GM10248 (cell line): ENCODE measurements at regions of chr4 and their contacts with region 1.

Region 1: GRCh38 chr4:6974138-6974848 is 64.7 kb downstream of the TBC1D14 start:
- DNase-seq: peak; percentile 74
- CTCF ChIP-seq: peak; percentile 75

Region 2: DNA sequence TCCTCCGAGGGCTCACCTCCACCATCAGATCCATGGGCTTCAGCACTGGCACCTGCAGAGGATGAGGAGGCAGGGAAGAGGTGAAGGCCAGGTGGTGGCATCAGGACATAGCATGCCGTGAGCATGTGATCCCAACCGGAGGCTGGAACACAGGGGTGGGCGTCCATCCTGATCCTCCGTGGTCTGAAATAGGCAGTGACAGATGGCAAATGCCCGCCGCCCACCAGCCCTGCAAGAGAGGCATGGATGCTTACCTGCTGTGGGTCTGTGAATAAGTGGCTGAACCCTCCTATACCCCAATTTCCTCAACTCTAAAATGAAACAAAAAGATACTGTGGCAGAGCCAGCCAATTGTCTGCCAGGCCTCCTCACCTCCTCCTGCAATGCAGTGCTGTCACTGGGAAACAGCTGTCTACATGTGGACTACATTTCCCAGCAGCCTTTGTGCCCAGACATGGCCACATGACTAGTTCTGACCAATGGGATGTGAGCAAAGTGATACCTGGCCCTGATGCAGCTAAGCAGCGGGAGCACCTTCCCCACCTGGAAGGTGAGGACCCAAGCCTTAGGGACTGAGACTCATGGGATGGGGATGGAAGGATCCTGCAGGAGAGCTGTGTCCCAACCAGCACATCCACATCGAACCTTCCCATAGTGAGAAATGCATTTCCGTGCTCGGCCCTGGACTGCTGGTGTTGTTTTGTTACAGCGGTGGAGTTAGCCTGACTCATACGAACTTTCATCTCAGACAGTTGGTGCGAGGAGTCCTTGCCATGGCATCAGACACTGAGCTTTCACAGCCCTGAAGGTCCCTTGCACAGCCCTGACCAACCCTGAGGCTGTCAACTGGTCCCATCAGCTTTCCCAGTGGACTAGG is 601.4 kb before region 1 on chr4:
- CTCF ChIA-PET with region 1: no interaction called
- POLR2A ChIA-PET with region 1: no interaction called
- DNase-seq: peak; percentile 69
- CTCF ChIP-seq: no peak

Region 3: GRCh38 chr4:6437826-6438238 is 536.5 kb before region 1 on chr4:
- CTCF ChIA-PET with region 1: no interaction called
- POLR2A ChIA-PET with region 1: no interaction called
- DNase-seq: no peak
- CTCF ChIP-seq: no peak

Region 4: GRCh38 chr4:6942238-6942800 is 32.0 kb before region 1 on chr4:
- CTCF ChIA-PET with region 1: interaction called, 11 read pairs
- POLR2A ChIA-PET with region 1: no interaction called
- DNase-seq: peak; percentile 59
- CTCF ChIP-seq: no peak

Region 5: DNA sequence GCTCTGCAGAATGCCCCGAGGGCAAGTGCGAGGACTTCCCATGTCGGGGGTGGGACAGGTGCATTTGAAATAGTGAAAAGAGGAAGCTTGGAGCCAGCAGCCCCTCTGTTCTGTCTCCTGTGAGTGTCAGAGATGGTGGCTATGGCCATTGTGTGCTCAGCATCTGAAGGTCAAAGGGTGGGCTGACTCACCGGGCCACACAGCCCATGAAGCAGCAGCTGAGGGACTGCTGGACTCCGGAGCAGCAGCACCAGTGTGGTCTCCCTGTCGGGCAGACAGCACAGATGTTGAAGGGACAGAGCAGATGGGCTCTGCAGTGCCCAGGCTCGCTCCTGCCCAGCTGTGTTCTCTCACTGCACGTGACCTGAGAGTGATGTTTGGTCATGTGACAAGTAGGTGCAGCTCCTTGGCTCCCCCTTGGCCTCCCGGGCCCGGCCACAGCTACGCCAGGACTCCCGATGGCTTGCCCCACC is 11.1 kb before region 1 on chr4:
- CTCF ChIA-PET with region 1: interaction called, 67 read pairs
- POLR2A ChIA-PET with region 1: no interaction called
- DNase-seq: peak; percentile 44
- CTCF ChIP-seq: no peak

Region 6: GRCh38 chr4:6986781-6987587 is 12.7 kb after region 1 on chr4:
- CTCF ChIA-PET with region 1: interaction called, 54 read pairs
- POLR2A ChIA-PET with region 1: no interaction called
- DNase-seq: peak; percentile 99
- CTCF ChIP-seq: no peak

Region 7: GRCh38 chr4:7017446-7018330 is 43.4 kb after region 1 on chr4:
- CTCF ChIA-PET with region 1: interaction called, 15 read pairs
- POLR2A ChIA-PET with region 1: no interaction called
- DNase-seq: no peak
- CTCF ChIP-seq: no peak